Panc1 (cell line): ENCODE measurements at regions of chr14 and their contacts with region 1.

Region 1: DNA sequence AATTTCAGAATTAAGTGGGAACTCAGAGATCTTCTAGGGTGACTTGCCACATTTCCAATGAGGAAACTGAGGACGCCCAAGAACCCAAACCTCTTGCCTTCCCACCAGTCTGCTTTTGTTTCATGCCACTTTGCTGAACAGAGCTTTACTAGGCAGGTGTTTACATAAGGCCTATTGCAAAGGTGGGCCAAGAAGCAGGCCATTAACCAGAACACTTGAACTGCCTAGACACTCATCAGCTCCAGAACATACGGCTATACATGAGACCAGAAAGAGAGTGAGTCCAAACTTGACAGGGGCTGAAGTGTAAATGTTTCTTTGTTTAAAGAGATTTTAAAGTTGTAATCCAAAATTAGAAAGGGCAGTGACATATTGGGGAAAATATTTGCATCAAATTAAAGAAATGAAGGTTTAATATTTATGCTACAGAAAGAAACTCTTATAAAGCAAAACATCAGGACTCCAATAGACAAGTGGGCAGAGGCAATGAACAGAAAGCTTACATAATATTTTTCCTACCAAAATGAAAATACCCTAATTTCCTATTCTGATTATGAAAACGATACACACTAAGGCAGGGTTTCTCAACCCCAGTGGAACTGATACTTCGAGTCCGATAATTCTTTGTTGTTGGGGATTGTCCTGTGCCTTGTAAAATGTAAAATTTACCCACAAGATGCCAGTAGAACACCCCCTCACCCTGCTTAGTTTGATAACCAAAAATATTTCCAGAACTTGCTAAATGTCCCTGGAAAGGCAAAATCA is 11.7 kb downstream of the BATF start:
- DNase-seq: no peak
- ATAC-seq: no peak
- H3K4me3 ChIP-seq: no peak overlapping the region
- H3K27ac ChIP-seq: no peak overlapping the region
- H3K4me1 ChIP-seq: peaks cover 11% of the 10 kb centered on the region
- H3K27me3 ChIP-seq: no peaks in the 10 kb centered on the region
- CTCF ChIP-seq: no peak

Region 2: GRCh38 chr14:75487155-75487671 is 46.8 kb before region 1 on chr14:
- CTCF ChIA-PET with region 1: interaction called, 15 read pairs
- POLR2A ChIA-PET with region 1: no interaction called
- in situ Hi-C with region 1: no loop called
- intact Hi-C with region 1: no loop called
- DNase-seq: no peak
- ATAC-seq: no peak
- H3K4me3 ChIP-seq: no peak overlapping the region
- H3K27ac ChIP-seq: no peak overlapping the region
- H3K4me1 ChIP-seq: no peaks in the 10 kb centered on the region
- H3K27me3 ChIP-seq: no peaks in the 10 kb centered on the region
- CTCF ChIP-seq: no peak

Region 3: DNA sequence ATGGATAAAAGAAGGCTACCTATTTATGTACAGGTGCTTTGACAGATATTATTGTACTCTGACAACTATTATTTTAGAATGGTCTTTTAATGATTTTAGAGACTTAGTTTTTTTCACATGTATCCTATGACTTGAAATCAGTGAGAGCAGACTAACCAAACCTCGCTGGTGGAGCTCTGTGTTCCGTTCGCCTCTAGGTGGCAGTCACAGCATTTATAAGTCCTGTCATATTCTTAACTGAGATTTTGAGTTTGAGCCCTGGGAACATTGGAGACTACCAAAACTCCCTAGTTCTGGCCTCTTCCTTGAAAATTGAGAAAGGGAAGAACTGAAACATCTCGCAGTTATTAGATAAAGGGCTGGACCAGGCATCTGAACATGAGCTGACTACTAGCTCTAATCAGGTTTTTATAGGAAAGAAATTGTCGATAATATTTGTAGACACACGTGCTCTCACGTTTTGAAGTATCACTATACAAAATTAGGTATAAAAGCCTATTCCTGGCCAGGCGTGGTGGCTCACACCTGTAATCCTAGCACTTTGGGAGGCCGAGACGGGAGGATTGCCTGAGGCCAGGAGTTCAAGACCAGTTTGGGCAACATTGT is 175.3 kb after region 1 on chr14:
- CTCF ChIA-PET with region 1: no interaction called
- POLR2A ChIA-PET with region 1: no interaction called
- in situ Hi-C with region 1: no loop called
- intact Hi-C with region 1: no loop called
- DNase-seq: peak; percentile 45
- ATAC-seq: peak; percentile 80
- H3K4me3 ChIP-seq: no peak overlapping the region
- H3K27ac ChIP-seq: no peak overlapping the region
- H3K4me1 ChIP-seq: peaks cover 19% of the 10 kb centered on the region
- H3K27me3 ChIP-seq: no peaks in the 10 kb centered on the region
- CTCF ChIP-seq: peak; percentile 78